GM10248 (cell line): ENCODE measurements at regions of chrX and their contacts with region 1.

Region 1: GRCh38 chrX:153032397-153033118 is 23.7 kb upstream of the PNMA3 start:
- DNase-seq: peak; percentile 85
- CTCF ChIP-seq: peak; percentile 86

Region 2: DNA sequence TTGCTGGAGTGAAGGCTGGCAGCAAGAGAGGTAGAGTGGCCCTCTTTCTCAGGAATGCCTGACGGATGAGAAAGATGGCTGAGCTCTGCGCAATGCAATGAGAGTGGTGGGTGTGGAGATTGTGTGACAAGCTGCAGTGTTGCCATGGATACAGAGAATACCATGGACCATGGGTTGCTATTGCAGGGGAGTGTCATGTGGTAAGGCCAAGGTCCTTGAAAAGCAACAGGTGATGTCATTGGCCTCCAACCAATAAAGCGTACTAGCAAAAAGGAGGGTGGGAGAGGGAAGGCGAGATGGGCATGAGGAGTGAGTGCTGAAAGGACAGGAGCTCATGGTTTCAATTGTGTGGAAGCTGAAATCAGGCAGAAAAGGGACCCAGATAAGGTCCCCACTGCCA is 40.4 kb before region 1 on chrX:
- CTCF ChIA-PET with region 1: no interaction called
- POLR2A ChIA-PET with region 1: no interaction called
- DNase-seq: no peak
- CTCF ChIP-seq: no peak

Region 3: GRCh38 chrX:153539171-153539978 is 506.8 kb after region 1 on chrX:
- CTCF ChIA-PET with region 1: interaction called, 10 read pairs
- POLR2A ChIA-PET with region 1: no interaction called
- DNase-seq: peak; percentile 77
- CTCF ChIP-seq: peak; percentile 79